GM12878 (cell line): ENCODE measurements at regions of chr22 and their contacts with region 1.

Region 1: GRCh38 chr22:23608583-23608982 is 23.5 kb downstream of the DRICH1 start:
- DNase-seq: no peak
- ATAC-seq: no peak
- H3K4me3 ChIP-seq: no peak overlapping the region
- H3K27ac ChIP-seq: no peak overlapping the region
- H3K4me1 ChIP-seq: no peaks in the 10 kb centered on the region; the same call in 1 of the 2 replicates
- H3K27me3 ChIP-seq: peaks cover 0 to 2% of the 10 kb centered on the region in 2 experiments; a peak in 1 of 4 replicates
- CTCF ChIP-seq: no peak
- EP300 ChIP-seq: no peak
- POLR2A ChIP-seq: no peak
- RAD21 ChIP-seq: no peak

Region 2: GRCh38 chr22:23655891-23656475 is 47.4 kb after region 1 on chr22:
- CTCF ChIA-PET with region 1: no interaction called
- POLR2A ChIA-PET with region 1: no interaction called
- RAD21 ChIA-PET with region 1: no interaction called
- SMC1A ChIA-PET with region 1: no interaction called
- in situ Hi-C with region 1: loop called (anchors 5 kb)
- intact Hi-C with region 1: no loop called
- DNase-seq: no peak
- ATAC-seq: no peak
- H3K4me3 ChIP-seq: no peak overlapping the region
- H3K27ac ChIP-seq: no peak overlapping the region
- H3K4me1 ChIP-seq: no peaks in the 10 kb centered on the region
- H3K27me3 ChIP-seq: no peaks in the 10 kb centered on the region
- CTCF ChIP-seq: no peak
- EP300 ChIP-seq: no peak
- POLR2A ChIP-seq: no peak
- RAD21 ChIP-seq: no peak